CD14-positive monocyte (primary cell): ENCODE measurements at regions of chr14 and their contacts with region 1.

Region 1: DNA sequence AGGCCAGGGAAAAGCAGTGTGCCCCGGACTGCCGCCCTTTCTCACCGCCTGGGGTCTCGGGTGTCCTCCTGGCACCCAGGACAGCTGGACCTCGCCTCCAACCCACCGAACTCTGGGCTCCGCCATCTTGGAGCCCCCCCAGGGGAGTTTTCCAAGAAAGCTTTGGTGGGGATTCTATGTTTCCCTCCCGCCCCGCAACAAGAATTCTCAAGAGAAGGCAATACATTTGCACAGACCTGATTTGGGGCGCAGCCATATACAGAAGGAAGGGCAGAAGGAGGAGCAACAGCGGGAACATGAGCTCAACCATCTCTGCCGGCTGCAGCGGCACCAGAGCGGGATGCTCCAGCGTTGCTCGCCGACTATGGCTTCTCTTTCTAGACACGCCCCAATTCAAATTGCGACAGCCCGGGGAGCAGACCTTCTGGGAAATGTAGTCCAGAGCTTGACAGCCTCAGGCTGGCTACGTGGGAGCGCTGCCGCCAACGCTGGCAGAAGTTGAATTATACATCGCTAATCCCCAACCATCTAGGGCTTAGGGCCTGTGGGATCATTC is at the start of gene RDH11:
- DNase-seq: peak; percentile 84 to 87 (median 84)
- H3K4me3 ChIP-seq: peak within 1 kb of the TSS; percentile 71 to 85 (median 72)
- H3K4me3 Mint-ChIP-seq: peak within 1 kb of the TSS; percentile 94
- H3K27ac ChIP-seq: peak within 1 kb of the TSS; percentile 5 to 68
- H3K27ac Mint-ChIP-seq: peak within 1 kb of the TSS; percentile 69 to 93 (median 88)
- H3K4me1 ChIP-seq: peaks cover 20 to 33% of the 10 kb centered on the region in 2 donors
- H3K4me1 Mint-ChIP-seq: peaks cover 28% of the 10 kb centered on the region
- H3K27me3 ChIP-seq: no peaks in the 10 kb centered on the region
- H3K27me3 Mint-ChIP-seq: peaks cover 0 to 6% (median 2%) of the 10 kb centered on the region in 3 donors
- CTCF ChIP-seq: no peak
- polyA plus RNA-seq, gene RDH11: 64.9 to 70.7 (median 65.4) TPM

Region 2: GRCh38 chr14:67359775-67360648 is 335.5 kb before region 1 on chr14 and contains the starts of genes ATP6V1D and EIF2S1:
- intact Hi-C with region 1: loop called in 1 of 2 experiments (anchors 1 kb)
- DNase-seq: peak; percentile 99 to 100 (median 100)
- H3K4me3 ChIP-seq: peak within 1 kb of the TSS; percentile 70 to 97 (median 78)
- H3K4me3 Mint-ChIP-seq: peak within 1 kb of the TSS; percentile 96 to 97
- H3K27ac ChIP-seq: peak within 1 kb of the TSS; percentile 74 to 96
- H3K27ac Mint-ChIP-seq: peak within 1 kb of the TSS; percentile 95 to 98 (median 97)
- H3K4me1 ChIP-seq: peaks cover 17 to 33% of the 10 kb centered on the region in 2 donors
- H3K4me1 Mint-ChIP-seq: peaks cover 44% of the 10 kb centered on the region
- H3K27me3 ChIP-seq: no peaks in the 10 kb centered on the region
- H3K27me3 Mint-ChIP-seq: no peaks in the 10 kb centered on the region
- CTCF ChIP-seq: peak; percentile 100
- polyA plus RNA-seq, gene ATP6V1D: 18.4 to 122 (median 94.1) TPM
- polyA plus RNA-seq, gene EIF2S1: 21.9 to 111 (median 110) TPM

Region 3: DNA sequence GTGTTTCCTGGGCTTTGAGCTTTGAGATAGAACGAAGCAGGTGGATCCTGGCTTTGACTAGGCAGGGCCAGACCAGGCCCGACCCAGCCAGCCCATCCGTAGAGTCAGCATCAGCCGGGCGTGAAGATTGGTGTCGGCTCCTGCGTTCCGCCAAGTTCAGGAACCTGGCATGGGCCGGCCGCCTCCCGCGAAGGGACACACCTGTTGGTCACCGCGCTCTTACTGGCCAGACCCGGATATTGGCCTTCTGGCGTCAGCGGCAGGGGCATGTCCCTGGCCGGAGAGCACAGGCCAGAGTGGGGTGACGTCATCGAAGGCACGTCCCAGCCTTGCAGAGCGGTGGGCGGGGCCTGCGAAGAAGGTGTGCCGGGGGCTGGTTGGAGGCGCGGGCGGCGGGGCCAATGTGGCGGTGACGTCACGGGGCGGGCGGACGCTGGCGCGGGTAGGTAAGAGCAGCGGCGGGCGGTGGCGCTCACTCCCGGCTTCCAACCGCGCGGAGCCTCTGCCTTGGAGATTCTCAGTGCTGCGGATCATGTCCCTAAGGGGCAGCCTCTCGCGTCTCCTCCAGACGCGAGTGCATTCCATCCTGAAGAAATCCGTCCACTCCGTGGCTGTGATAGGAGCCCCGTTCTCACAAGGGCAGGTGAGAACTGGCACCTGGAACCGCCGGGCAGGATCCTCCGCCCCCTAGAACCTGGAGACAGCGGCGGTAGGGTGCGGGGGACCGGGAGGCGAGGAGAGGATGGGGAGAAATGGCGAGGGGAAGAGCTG is 75.8 kb before region 1 on chr14 and contains the start of gene ARG2:
- intact Hi-C with region 1: loop called (anchors 2 to 5 kb)
- DNase-seq: peak; percentile 93 to 98 (median 94)
- H3K4me3 ChIP-seq: peak within 1 kb of the TSS; percentile 51 to 89 (median 75)
- H3K4me3 Mint-ChIP-seq: peak within 1 kb of the TSS; percentile 85
- H3K27ac ChIP-seq: peak within 1 kb of the TSS in 1 of 2 donors; percentile 73
- H3K27ac Mint-ChIP-seq: peak within 1 kb of the TSS; percentile 74 to 91 (median 83)
- H3K4me1 ChIP-seq: peaks cover 16 to 20% of the 10 kb centered on the region in 2 donors
- H3K4me1 Mint-ChIP-seq: peaks cover 24% of the 10 kb centered on the region
- H3K27me3 ChIP-seq: peaks cover 4 to 10% of the 10 kb centered on the region in 2 donors
- H3K27me3 Mint-ChIP-seq: peaks cover 13 to 27% (median 23%) of the 10 kb centered on the region in 3 donors
- CTCF ChIP-seq: no peak
- polyA plus RNA-seq, gene ARG2: 0.13 to 0.46 (median 0.33) TPM

Region 4: DNA sequence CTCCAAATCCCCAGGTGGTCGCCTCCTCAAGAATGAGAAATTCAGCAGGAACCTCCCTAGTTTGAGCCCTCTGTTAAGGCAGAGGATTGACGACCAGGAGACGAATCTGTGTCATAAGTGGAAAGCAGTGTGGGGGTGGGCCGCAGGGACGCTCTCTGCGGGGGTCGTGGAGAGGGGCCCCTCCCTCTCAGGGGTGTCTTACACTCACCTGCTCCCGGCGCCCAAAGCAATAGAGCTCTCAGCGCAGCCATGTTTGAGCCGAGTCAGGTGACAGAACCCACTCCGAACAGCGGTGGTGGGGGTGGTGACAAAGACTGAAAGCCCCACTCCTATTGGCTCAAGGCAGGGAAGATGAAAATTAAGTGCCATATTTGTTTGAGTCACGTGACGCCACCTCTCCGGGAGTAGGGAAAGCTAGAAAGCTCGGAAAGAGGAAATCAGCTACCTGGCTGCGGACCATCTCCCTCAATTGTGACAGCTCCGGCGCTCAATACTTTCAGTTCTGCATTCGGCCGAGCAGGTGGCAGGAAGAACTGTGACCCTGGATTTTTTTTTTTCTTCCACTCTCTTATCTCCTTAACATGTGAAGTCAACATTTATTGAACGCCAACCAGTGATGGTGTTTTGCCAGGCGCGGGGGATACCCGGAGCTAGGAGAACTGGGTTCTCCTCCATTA is 121.0 kb after region 1 on chr14 and contains the start of gene ZFYVE26:
- intact Hi-C with region 1: loop called in 1 of 2 experiments (anchors 5 kb)
- DNase-seq: peak; percentile 78 to 96 (median 93)
- H3K4me3 ChIP-seq: peak within 1 kb of the TSS; percentile 81 to 89 (median 81)
- H3K4me3 Mint-ChIP-seq: peak within 1 kb of the TSS; percentile 88 to 95
- H3K27ac ChIP-seq: peak within 1 kb of the TSS; percentile 74 to 90
- H3K27ac Mint-ChIP-seq: peak within 1 kb of the TSS; percentile 93 to 97 (median 95)
- H3K4me1 ChIP-seq: peaks cover 59 to 65% of the 10 kb centered on the region in 2 donors
- H3K4me1 Mint-ChIP-seq: peaks cover 66% of the 10 kb centered on the region
- H3K27me3 ChIP-seq: no peaks in the 10 kb centered on the region
- H3K27me3 Mint-ChIP-seq: no peaks in the 10 kb centered on the region
- CTCF ChIP-seq: no peak
- polyA plus RNA-seq, gene ZFYVE26: 1.0 to 17.6 (median 2.3) TPM